Right cardiac atrium (tissue), 5 donors: ENCODE measurements at regions of chr19 and their contacts with region 1.

Region 1: DNA sequence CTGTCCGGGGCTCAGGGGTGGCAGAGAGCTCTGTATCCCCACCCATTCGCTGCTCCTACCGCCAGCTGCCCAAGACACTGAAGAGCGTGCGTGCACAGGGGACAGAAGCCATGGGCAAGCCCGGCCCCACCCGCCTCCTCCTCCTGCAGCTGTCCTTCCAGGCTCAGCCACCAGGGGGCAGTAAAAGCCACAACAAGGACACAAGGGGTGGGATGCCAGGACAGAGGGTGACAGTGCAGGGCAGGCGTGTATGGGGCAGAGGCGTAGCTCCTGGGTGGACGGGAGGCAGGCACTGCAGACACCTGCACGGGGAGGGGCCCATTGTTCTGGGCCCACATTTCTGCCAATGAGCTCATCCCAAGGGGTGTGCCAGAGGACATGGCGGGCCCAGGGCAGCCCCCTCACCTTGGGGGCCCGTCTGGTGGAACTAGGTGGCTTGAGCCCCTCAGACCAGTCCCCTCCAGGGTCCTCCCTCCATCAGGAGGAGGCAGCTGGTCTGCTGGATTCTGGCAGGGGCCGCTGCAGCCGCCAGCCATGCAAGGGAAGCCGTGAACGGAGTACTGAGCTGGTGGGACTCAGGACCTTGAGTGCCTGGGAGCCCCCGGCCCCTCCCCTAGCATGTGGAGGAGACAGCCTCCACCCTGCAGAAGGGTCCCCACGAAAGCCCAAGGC is 61.1 kb downstream of the MLLT1 start:
- DNase-seq: peak; percentile 91 to 97 (median 96)
- ATAC-seq: peak; percentile 60 to 74
- H3K4me3 ChIP-seq: no peak overlapping the region
- H3K27ac ChIP-seq: no peak overlapping the region
- H3K4me1 ChIP-seq: peaks cover 28% of the 10 kb centered on the region
- H3K27me3 ChIP-seq: no peaks in the 10 kb centered on the region

Region 2: DNA sequence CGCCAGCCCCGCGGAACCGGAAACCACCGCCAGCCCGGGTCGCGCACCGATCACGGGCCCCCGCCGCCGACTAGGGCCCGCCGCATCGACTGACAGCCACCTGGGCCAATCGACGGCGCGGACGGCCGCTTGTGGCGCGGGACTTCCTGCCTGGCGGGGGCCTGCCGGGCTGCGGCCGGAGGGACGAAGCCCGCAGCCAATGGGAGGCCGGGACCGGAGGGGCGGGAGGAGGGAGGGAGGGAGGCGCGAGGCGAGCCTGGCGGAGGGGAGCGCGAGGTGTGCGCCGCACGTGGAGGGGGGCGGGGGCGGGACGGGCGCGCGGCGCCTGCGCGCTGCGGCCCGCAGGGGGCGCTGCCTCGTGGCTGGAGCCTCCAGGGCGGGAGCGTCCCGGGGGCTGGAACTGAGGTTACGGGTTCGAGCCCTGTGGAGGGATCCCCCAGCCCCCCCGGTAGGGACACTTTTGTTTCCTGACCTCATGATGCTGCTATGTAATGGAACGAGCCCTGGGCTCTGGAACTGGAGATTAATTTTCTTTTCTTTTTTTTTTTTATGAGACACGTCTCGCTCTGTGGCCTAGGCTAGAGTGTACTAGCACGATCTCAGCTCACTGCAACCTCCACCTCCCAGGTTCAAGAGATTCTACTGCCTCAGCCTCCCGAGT is 61.4 kb after region 1 on chr19 and contains the start of gene MLLT1:
- intact Hi-C with region 1: loop called in 2 of 4 experiments (anchors 5 kb)
- DNase-seq: peak; percentile 97 to 99 (median 99)
- ATAC-seq: peak; percentile 97
- H3K4me3 ChIP-seq: peak within 1 kb of the TSS; percentile 99
- H3K27ac ChIP-seq: peak within 1 kb of the TSS; percentile 84
- H3K4me1 ChIP-seq: peaks cover 36% of the 10 kb centered on the region
- H3K27me3 ChIP-seq: no peaks in the 10 kb centered on the region
- total RNA-seq, gene MLLT1: 62.5 to 67.3 (median 65.5) TPM